WTC11 (cell line): ENCODE measurements at regions of chr6 and their contacts with region 1.

Region 1: GRCh38 chr6:26342106-26343004 is 22.6 kb upstream of the BTN3A2 start:
- DNase-seq: peak; percentile 30
- ATAC-seq: peak; percentile 8
- H3K4me3 Mint-ChIP-seq: peak overlapping the region; percentile 91
- H3K27ac Mint-ChIP-seq: no peak overlapping the region
- H3K4me1 Mint-ChIP-seq: peaks cover 13% of the 10 kb centered on the region
- H3K27me3 Mint-ChIP-seq: no peaks in the 10 kb centered on the region; the same call in none of the 2 replicates
- CTCF ChIP-seq: no peak

Region 2: GRCh38 chr6:26322645-26323482 is 19.5 kb before region 1 on chr6:
- CTCF ChIA-PET with region 1: interaction called, 11 read pairs
- POLR2A ChIA-PET with region 1: no interaction called
- DNase-seq: peak; percentile 52
- ATAC-seq: peak; percentile 66
- H3K4me3 Mint-ChIP-seq: peak overlapping the region; percentile 87
- H3K27ac Mint-ChIP-seq: peak overlapping the region; percentile 51
- H3K4me1 Mint-ChIP-seq: peaks cover 28% of the 10 kb centered on the region
- H3K27me3 Mint-ChIP-seq: no peaks in the 10 kb centered on the region; the same call in 1 of the 2 replicates
- CTCF ChIP-seq: no peak

Region 3: GRCh38 chr6:26363882-26364701 is 21.7 kb after region 1 on chr6:
- CTCF ChIA-PET with region 1: no interaction called
- POLR2A ChIA-PET with region 1: no interaction called
- DNase-seq: no peak
- ATAC-seq: no peak
- H3K4me3 Mint-ChIP-seq: no peak overlapping the region
- H3K27ac Mint-ChIP-seq: 0 out of 2 replicates have a peak overlapping the region, but pooled peaks have one; percentile 9
- H3K4me1 Mint-ChIP-seq: no peaks in the 10 kb centered on the region
- H3K27me3 Mint-ChIP-seq: peaks cover 3% of the 10 kb centered on the region
- CTCF ChIP-seq: no peak

Region 4: GRCh38 chr6:26411751-26412150 is 69.4 kb after region 1 on chr6:
- CTCF ChIA-PET with region 1: interaction called, 14 read pairs
- POLR2A ChIA-PET with region 1: no interaction called
- DNase-seq: no peak
- ATAC-seq: no peak
- H3K4me3 Mint-ChIP-seq: no peak overlapping the region
- H3K27ac Mint-ChIP-seq: no peak overlapping the region
- H3K4me1 Mint-ChIP-seq: peaks cover 21% of the 10 kb centered on the region
- H3K27me3 Mint-ChIP-seq: peaks cover 8% of the 10 kb centered on the region
- CTCF ChIP-seq: no peak

Region 5: DNA sequence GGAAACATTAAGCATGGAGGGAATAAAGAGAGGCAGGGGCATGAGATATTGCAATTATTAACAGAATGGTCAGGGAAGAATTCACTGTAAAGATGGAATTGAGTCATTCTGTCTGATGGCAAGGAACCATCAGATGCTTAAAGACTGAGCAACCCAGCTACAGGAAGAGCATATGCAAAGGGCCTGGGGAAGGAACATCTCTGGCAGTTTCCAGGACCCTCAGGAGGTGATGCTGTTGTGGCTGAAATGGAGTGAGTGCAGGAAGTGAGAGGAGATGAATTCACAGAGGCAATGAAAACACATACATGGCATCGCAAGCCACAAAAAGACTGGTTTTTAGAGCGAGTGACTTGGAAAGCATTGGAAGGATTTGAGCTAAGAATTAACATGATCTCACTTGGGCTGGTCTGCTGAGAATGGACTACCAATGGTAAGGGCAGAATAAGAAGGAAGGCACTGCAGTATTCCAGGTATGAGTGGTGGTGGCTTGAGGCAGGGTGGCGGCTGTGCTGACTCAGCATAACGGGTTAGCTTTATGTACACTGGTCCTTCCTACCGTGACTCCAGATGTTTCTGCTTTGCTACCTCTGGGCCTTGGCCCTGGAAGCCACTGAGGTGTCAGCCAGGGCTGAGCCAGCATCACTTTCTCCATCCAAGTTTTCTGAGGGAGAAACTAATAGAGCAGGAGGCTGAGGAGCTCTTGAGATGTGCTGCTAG is 84.9 kb after region 1 on chr6:
- CTCF ChIA-PET with region 1: no interaction called
- POLR2A ChIA-PET with region 1: no interaction called
- DNase-seq: no peak
- ATAC-seq: no peak
- H3K4me3 Mint-ChIP-seq: no peak overlapping the region
- H3K27ac Mint-ChIP-seq: no peak overlapping the region
- H3K4me1 Mint-ChIP-seq: no peaks in the 10 kb centered on the region; the same call in 1 of the 2 replicates
- H3K27me3 Mint-ChIP-seq: no peaks in the 10 kb centered on the region; the same call in 1 of the 2 replicates
- CTCF ChIP-seq: no peak

Region 6: DNA sequence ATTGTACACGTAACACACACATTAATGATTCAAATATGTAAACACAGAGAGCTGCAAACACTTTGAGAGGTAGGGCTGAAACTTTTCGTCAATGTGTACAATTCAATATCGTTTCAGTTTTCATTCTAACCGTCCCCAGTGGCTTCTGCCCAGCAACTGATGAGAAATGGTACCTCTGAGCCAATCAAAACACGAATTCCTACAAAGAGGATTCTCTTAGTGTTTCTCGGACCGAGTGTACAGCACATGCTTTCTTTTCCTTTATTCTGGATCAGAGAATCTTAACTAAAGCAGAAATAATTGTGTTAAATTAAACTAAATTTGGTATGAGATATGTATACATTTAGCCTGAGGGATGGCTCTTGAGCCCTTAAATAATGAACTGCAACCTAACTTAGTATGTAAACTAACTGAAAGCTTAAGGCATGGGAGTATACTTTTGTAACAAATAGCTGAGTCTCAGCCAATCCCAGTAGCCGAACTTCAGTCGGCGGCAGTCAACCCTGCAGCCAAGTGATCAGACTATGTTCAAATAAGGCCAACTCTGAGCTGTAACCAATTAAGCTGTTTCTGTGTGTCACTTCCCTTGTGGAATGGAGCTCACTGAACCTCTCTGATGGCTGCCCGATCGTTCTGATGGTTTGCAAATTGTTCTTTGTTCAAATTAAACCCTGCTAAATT is 131.5 kb after region 1 on chr6:
- CTCF ChIA-PET with region 1: interaction called, 10 read pairs
- POLR2A ChIA-PET with region 1: no interaction called
- DNase-seq: peak; percentile 33
- ATAC-seq: peak; percentile 90
- H3K4me3 Mint-ChIP-seq: peak overlapping the region; percentile 59
- H3K27ac Mint-ChIP-seq: peak overlapping the region; percentile 98
- H3K4me1 Mint-ChIP-seq: peaks cover 33% of the 10 kb centered on the region
- H3K27me3 Mint-ChIP-seq: no peaks in the 10 kb centered on the region
- CTCF ChIP-seq: no peak

Region 7: DNA sequence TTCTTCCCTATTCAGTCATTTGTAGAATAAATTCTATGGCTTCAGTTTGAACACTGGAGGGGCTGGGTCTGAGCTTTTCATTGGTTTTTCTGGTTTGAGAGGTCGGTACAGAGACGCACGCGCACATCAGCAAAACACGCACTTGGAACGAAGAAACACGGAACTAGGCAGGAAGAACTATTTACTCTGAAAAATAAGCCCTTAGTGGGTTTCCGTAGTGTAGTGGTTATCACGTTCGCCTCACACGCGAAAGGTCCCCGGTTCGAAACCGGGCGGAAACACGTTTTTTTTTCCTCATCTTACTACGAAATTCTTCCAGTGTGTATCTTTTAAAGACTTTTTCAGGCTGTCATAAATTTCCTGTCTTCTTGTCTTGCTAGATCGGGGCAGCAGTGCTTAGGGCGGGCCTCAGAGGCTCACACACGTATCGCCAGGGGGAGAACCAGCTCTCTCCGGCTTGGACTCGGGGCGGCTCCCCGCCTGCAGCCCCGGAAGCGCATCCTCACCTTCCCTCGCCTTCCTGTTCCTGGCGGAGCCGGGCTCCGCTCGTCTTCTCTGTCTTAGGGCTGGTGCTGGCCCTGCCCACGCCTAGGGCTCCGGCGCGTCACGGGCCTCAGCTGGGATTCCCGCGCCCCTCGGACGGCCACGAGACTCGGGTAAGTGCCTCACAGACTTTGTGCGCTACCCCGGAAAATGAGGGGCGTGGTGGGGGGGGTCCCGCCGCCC is 195.7 kb after region 1 on chr6 and contains the start of gene HMGN4:
- CTCF ChIA-PET with region 1: interaction called, 19 read pairs
- POLR2A ChIA-PET with region 1: interaction called, 7 read pairs
- DNase-seq: peak; percentile 81
- ATAC-seq: peak; percentile 70
- H3K4me3 Mint-ChIP-seq: peak within 1 kb of the TSS; percentile 96
- H3K27ac Mint-ChIP-seq: peak within 1 kb of the TSS; percentile 100
- H3K4me1 Mint-ChIP-seq: peaks cover 34% of the 10 kb centered on the region
- H3K27me3 Mint-ChIP-seq: no peaks in the 10 kb centered on the region
- CTCF ChIP-seq: no peak
- total RNA-seq, gene HMGN4: 57.1 to 67.4 TPM (median 57.6 TPM) in 3 replicates

Region 8: DNA sequence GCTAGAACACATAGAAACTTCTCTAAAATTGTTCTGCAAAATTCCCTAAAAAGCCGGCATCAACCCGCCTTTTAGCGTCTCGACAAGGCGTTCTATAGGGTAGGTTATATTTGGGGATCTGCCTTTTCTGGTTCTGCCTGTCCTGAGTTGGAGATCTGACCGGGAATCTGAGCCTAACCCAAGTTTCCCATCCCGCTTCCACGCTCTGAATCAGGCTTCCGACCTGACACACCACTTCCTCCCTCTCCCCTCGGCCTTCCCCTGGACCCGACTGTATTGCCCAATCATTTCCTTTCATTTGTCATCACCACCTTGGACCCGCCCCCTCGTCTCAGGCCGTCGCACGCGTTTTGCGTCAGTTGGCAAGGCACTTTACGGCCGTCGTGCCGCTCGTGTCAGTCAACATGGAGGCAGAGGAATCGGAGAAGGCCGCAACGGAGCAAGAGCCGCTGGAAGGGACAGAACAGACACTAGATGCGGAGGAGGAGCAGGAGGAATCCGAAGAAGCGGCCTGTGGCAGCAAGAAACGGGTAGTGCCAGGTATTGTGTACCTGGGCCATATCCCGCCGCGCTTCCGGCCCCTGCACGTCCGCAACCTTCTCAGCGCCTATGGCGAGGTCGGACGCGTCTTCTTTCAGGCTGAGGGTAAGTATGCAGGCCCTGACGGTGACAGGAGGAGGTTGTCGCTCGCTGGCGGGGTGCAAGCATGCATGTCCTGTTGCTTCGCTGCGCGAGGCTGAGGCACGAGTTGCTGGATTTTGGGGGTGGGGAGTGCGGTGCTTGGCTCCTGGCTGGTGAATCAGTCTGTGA is 254.4 kb after region 1 on chr6 and contains the start of gene ABT1:
- CTCF ChIA-PET with region 1: interaction called, 66 read pairs
- POLR2A ChIA-PET with region 1: interaction called, 5 read pairs
- DNase-seq: peak; percentile 99
- ATAC-seq: peak; percentile 75
- H3K4me3 Mint-ChIP-seq: no peak within 1 kb of the TSS
- H3K27ac Mint-ChIP-seq: no peak within 1 kb of the TSS
- H3K4me1 Mint-ChIP-seq: peaks cover 11% of the 10 kb centered on the region
- H3K27me3 Mint-ChIP-seq: peaks cover 9% of the 10 kb centered on the region; the same call in 1 of the 2 replicates
- CTCF ChIP-seq: no peak
- total RNA-seq, gene ABT1: 21.0 to 22.1 TPM (median 21.6 TPM) in 3 replicates